ENCODE measurements at regions of chr10 and their contacts with region 1.

Region 1: GRCh38 chr10:63261496-63261895 is 128.4 kb downstream of the NRBF2 start:
- DNase-seq: no peak
- ATAC-seq: peak; percentile 46
- H3K4me3 ChIP-seq: peak overlapping the region; percentile 35; the same call in 1 of the 2 replicates
- H3K27ac ChIP-seq: peak overlapping the region; percentile 81
- H3K4me1 ChIP-seq: peaks cover 32% of the 10 kb centered on the region
- H3K27me3 ChIP-seq: no peaks in the 10 kb centered on the region
- CTCF ChIP-seq: no peak
- EP300 ChIP-seq: 0 out of 4 replicates have a peak, but pooled peaks of 1 of the 2 experiments have one; percentile 24
- POLR2A ChIP-seq: no peak
- RAD21 ChIP-seq: no peak

Region 2: DNA sequence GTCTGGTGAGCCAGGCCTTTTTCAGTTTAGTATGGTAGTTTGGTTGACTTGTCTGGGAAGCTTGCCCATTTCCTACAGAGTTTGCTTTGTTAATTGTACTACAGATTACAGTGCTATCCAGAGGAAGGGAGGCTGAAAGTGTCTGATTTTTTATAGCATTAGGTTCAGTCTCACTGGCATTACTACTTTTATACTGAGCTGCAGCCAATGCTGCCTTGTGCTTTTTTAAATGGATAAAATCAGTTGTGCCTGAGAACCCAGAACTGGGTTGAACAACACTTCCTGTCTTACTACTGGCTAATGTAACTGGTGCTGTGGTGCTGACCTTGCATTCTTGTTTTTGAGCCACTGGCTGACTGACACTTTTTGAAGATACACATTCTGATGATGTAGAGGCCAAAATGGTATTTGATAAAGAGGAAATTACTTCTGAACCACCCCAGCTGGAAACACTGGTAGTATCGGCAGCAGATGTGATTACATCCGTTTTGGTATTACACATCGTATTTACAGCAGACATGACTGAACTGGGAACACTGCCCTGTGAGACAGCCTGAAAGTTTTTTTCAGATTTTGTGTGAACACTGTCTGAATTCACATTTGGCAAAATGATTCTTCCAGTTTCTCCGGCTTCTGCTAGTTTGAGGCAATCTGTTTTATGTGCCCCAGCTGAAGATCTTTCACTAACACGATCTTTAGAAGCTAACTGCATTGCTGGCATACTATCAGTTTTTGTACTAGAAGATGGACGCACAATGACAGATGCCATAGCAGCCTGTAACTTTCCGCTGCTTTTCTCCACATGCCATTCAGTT is 54.3 kb before region 1 on chr10:
- CTCF ChIA-PET with region 1: interaction called, 3 read pairs
- POLR2A ChIA-PET with region 1: interaction called, 3 read pairs
- RAD21 ChIA-PET with region 1: interaction called, 21 read pairs
- SMC1A ChIA-PET with region 1: interaction called, 27 read pairs
- in situ Hi-C with region 1: no loop called
- intact Hi-C with region 1: no loop called
- DNase-seq: peak; percentile 36
- ATAC-seq: peak; percentile 51
- H3K4me3 ChIP-seq: no peak overlapping the region; the same call in 1 of the 2 replicates
- H3K27ac ChIP-seq: peak overlapping the region; percentile 75
- H3K4me1 ChIP-seq: peaks cover 32% of the 10 kb centered on the region
- H3K27me3 ChIP-seq: no peaks in the 10 kb centered on the region
- CTCF ChIP-seq: no peak
- EP300 ChIP-seq: no peak
- POLR2A ChIP-seq: no peak; the same call in 1 of the 2 replicates
- RAD21 ChIP-seq: no peak

Region 3: DNA sequence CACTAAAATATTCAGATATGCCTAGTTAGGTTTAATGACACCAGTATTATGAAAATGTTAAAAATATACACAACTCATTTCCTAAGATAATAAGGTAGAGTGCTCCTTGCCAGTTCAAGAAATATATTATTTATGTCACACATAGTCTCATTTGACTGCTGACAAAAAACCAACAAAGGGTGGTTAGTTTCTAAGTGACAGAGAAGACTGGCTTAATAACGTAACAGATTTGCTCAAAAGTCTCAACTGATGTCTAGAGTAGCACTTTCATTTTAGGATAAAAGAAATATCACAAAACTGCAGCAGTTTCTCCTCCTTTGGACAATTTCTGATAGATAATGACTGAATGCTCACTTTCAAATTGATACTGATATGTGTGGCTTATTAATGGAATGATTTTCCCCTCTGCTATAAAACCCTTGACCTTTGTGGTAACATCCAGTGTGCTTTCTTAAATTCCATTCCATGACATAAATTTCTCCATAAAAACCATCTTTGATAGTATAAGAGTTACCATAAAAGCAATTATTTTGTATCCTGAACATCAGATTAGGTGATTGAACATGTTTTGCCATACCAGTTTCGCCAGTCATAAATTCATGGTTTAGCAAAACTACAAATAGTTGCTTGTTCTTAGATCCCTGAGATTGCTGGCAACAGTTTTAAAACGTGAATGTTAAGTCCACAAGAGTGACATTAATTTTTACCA is 34.1 kb before region 1 on chr10:
- CTCF ChIA-PET with region 1: interaction called, 3 read pairs
- POLR2A ChIA-PET with region 1: interaction called, 6 read pairs
- RAD21 ChIA-PET with region 1: interaction called, 17 read pairs
- SMC1A ChIA-PET with region 1: interaction called, 19 read pairs
- in situ Hi-C with region 1: no loop called
- intact Hi-C with region 1: loop called (anchors 5 kb)
- DNase-seq: no peak
- ATAC-seq: peak; percentile 79
- H3K4me3 ChIP-seq: no peak overlapping the region
- H3K27ac ChIP-seq: peak overlapping the region; percentile 66
- H3K4me1 ChIP-seq: peaks cover 27% of the 10 kb centered on the region
- H3K27me3 ChIP-seq: no peaks in the 10 kb centered on the region
- CTCF ChIP-seq: no peak
- EP300 ChIP-seq: no peak
- POLR2A ChIP-seq: no peak
- RAD21 ChIP-seq: no peak

Region 4: GRCh38 chr10:63241841-63242281 is 19.6 kb before region 1 on chr10:
- CTCF ChIA-PET with region 1: interaction called, 5 read pairs
- POLR2A ChIA-PET with region 1: interaction called, 12 read pairs
- RAD21 ChIA-PET with region 1: interaction called, 26 read pairs
- SMC1A ChIA-PET with region 1: interaction called, 47 read pairs
- in situ Hi-C with region 1: no loop called
- intact Hi-C with region 1: no loop called
- DNase-seq: no peak
- ATAC-seq: peak; percentile 37
- H3K4me3 ChIP-seq: peak overlapping the region; percentile 21; the same call in 1 of the 2 replicates
- H3K27ac ChIP-seq: no peak overlapping the region
- H3K4me1 ChIP-seq: peaks cover 25% of the 10 kb centered on the region
- H3K27me3 ChIP-seq: no peaks in the 10 kb centered on the region
- CTCF ChIP-seq: no peak
- EP300 ChIP-seq: no peak
- POLR2A ChIP-seq: no peak
- RAD21 ChIP-seq: no peak

Region 5: GRCh38 chr10:63318491-63318890 is 57.0 kb after region 1 on chr10:
- CTCF ChIA-PET with region 1: no interaction called
- POLR2A ChIA-PET with region 1: no interaction called
- RAD21 ChIA-PET with region 1: no interaction called
- SMC1A ChIA-PET with region 1: no interaction called
- in situ Hi-C with region 1: no loop called
- intact Hi-C with region 1: no loop called
- DNase-seq: no peak
- ATAC-seq: no peak
- H3K4me3 ChIP-seq: no peak overlapping the region
- H3K27ac ChIP-seq: no peak overlapping the region
- H3K4me1 ChIP-seq: no peaks in the 10 kb centered on the region
- H3K27me3 ChIP-seq: no peaks in the 10 kb centered on the region
- CTCF ChIP-seq: no peak
- EP300 ChIP-seq: no peak
- POLR2A ChIP-seq: no peak
- RAD21 ChIP-seq: no peak

Region 6: DNA sequence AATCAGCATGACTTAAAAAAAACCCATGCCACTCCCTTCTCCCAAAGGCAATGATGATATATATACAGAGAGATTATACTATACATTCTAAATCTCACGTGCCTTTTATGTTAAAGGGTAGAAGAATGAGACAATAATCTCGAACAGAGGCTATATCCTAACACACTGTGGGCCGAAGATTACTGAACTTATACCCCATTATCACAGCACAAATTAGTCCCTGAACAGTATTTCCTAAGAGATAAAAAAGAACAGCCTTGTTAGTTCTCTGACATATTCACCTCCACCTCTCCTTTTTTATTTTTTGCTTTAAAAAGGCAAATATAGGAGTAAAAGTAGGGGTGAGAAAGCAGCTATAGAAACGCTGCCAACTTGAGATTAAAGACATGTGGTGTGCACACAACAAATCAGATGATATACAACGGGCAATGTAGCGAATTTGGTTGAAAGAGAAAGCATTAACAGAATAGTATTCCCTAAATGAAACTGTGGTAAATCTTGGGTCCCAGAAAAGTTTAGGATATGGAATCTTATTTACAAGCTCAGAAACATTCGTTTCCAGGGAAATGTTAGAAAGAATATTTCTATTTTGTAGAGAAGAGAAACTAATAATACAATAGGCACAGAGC is 134.8 kb after region 1 on chr10:
- CTCF ChIA-PET with region 1: no interaction called
- POLR2A ChIA-PET with region 1: no interaction called
- RAD21 ChIA-PET with region 1: no interaction called
- SMC1A ChIA-PET with region 1: no interaction called
- in situ Hi-C with region 1: no loop called
- intact Hi-C with region 1: no loop called
- DNase-seq: no peak
- ATAC-seq: no peak
- H3K4me3 ChIP-seq: no peak overlapping the region
- H3K27ac ChIP-seq: no peak overlapping the region
- H3K4me1 ChIP-seq: no peaks in the 10 kb centered on the region
- H3K27me3 ChIP-seq: no peaks in the 10 kb centered on the region
- CTCF ChIP-seq: no peak
- EP300 ChIP-seq: no peak
- POLR2A ChIP-seq: no peak
- RAD21 ChIP-seq: no peak